Sigmoid colon (tissue), 7 donors: ENCODE measurements at regions of chr4 and their contacts with region 1.

Region 1: GRCh38 chr4:73080789-73081188 is 11.3 kb upstream of the COX18 start:
- DNase-seq: no peak
- H3K4me3 ChIP-seq: no peak overlapping the region
- H3K27ac ChIP-seq: no peak overlapping the region
- H3K4me1 ChIP-seq: no peaks in the 10 kb centered on the region
- H3K27me3 ChIP-seq: no peaks in the 10 kb centered on the region
- CTCF ChIP-seq: no peak
- EP300 ChIP-seq: no peak
- POLR2A ChIP-seq: no peak

Region 2: DNA sequence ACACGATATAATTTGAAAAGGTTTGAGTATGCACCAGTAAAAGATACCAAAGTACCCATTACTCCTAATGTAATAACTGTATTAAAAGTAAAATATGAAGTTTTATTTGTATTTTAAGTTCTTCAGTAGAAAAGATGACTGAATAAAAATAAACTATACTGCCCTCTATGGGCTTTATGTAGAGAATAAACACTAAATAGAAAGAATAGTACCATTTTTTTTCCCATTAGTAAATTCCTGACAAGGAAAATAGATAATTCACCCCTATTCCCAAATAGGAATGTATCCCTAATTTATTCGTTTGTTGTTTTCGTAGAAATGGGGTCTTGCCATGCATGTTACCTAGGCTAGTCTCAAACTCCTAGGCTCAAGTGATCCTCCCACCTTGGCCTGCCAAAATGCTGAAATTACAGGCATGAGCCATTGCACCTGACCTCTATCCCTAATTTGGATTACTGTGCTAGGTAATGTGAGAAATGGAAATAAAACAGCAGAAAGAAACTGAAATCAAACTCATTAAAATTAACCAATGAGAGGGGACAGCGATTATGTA is 62.3 kb after region 1 on chr4:
- intact Hi-C with region 1: loop called (anchors 10 kb)
- DNase-seq: no peak
- H3K4me3 ChIP-seq: no peak overlapping the region
- H3K27ac ChIP-seq: no peak overlapping the region
- H3K4me1 ChIP-seq: no peaks in the 10 kb centered on the region
- H3K27me3 ChIP-seq: no peaks in the 10 kb centered on the region
- CTCF ChIP-seq: no peak
- EP300 ChIP-seq: no peak
- POLR2A ChIP-seq: no peak

Region 3: DNA sequence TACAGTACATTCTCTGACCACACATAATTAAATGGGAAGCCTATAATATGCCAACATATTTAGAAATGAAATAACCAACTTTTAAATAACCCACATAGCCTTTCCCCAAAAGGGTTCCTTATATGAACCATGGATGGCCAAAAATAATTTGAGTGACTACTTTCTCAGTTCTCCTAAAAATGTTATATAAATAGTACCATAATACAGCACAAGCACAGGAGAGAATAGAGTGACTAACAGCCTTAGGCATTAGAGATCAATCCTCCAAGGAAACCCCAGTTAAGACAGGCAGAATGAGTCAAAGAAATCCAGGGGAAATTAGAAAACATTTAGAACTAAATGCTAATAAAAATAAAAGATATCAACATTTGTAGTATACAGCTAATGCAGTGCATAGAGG is 127.6 kb after region 1 on chr4:
- intact Hi-C with region 1: no loop called
- DNase-seq: no peak
- H3K4me3 ChIP-seq: no peak overlapping the region
- H3K27ac ChIP-seq: no peak overlapping the region
- H3K4me1 ChIP-seq: peaks cover 0 to 17% (median 6%) of the 10 kb centered on the region in 4 donors
- H3K27me3 ChIP-seq: no peaks in the 10 kb centered on the region
- CTCF ChIP-seq: no peak
- EP300 ChIP-seq: no peak
- POLR2A ChIP-seq: no peak